Endothelial cell of umbilical vein (primary cell): ENCODE measurements at regions of chr20 and their contacts with region 1.

Region 1: DNA sequence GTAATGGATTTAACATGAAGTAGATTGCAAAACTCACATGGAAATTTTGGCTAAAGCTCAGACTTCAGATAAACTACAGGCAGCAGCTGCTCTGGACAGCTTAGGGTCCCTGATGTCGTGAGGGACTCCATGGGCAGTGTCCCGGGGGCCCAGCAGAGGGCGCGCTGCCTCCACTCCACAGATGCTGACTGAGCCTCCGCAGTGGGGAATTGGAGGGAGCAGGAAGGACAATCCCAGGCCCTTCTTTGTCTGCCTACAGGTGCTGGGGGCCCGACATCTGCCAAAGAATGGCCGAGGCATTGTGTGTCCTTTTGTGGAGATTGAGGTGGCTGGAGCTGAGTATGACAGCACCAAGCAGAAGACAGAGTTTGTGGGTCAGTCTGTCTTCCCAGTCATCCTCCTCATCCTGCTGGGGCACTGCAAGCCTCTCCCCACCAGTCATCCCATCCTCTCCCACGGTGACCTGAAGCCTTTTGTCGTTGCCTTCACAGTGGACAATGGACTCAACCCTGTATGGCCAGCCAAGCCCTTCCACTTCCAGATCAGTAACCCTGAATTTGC is 35.9 kb downstream of the PLCG1 start:
- DNase-seq: peak; percentile 70
- H3K4me3 ChIP-seq: no peak overlapping the region
- H3K27ac ChIP-seq: no peak overlapping the region
- H3K4me1 ChIP-seq: peaks cover 7% of the 10 kb centered on the region
- H3K27me3 ChIP-seq: no peaks in the 10 kb centered on the region
- CTCF ChIP-seq: peak; percentile 94 to 96
- POLR2A ChIP-seq: no peak

Region 2: GRCh38 chr20:41142919-41143318 is 30.3 kb before region 1 on chr20:
- CTCF ChIA-PET with region 1: interaction called, 23 read pairs
- POLR2A ChIA-PET with region 1: no interaction called
- dilution Hi-C with region 1: no loop called
- intact Hi-C with region 1: no loop called
- DNase-seq: no peak
- H3K4me3 ChIP-seq: no peak overlapping the region
- H3K27ac ChIP-seq: no peak overlapping the region
- H3K4me1 ChIP-seq: peaks cover 80% of the 10 kb centered on the region
- H3K27me3 ChIP-seq: no peaks in the 10 kb centered on the region
- CTCF ChIP-seq: no peak
- POLR2A ChIP-seq: no peak

Region 3: GRCh38 chr20:41200446-41201202 is 27.4 kb after region 1 on chr20:
- CTCF ChIA-PET with region 1: interaction called, 23 read pairs
- POLR2A ChIA-PET with region 1: no interaction called
- dilution Hi-C with region 1: no loop called
- intact Hi-C with region 1: loop called (anchors 2 kb)
- DNase-seq: peak; percentile 87
- H3K4me3 ChIP-seq: no peak overlapping the region
- H3K27ac ChIP-seq: peak overlapping the region; percentile 63
- H3K4me1 ChIP-seq: peaks cover 18% of the 10 kb centered on the region
- H3K27me3 ChIP-seq: no peaks in the 10 kb centered on the region
- CTCF ChIP-seq: no peak
- POLR2A ChIP-seq: no peak

Region 4: GRCh38 chr20:41242807-41243206 is 69.6 kb after region 1 on chr20:
- CTCF ChIA-PET with region 1: interaction called, 11 read pairs
- POLR2A ChIA-PET with region 1: no interaction called
- dilution Hi-C with region 1: no loop called
- intact Hi-C with region 1: no loop called
- DNase-seq: no peak
- H3K4me3 ChIP-seq: no peak overlapping the region
- H3K27ac ChIP-seq: no peak overlapping the region
- H3K4me1 ChIP-seq: peaks cover 27% of the 10 kb centered on the region
- H3K27me3 ChIP-seq: no peaks in the 10 kb centered on the region
- CTCF ChIP-seq: no peak
- POLR2A ChIP-seq: no peak

Region 5: GRCh38 chr20:41339507-41340326 is 166.5 kb after region 1 on chr20:
- CTCF ChIA-PET with region 1: interaction called, 295 read pairs
- POLR2A ChIA-PET with region 1: interaction called, 3 read pairs
- dilution Hi-C with region 1: no loop called
- intact Hi-C with region 1: loop called (anchors 1 kb)
- DNase-seq: peak; percentile 62
- H3K4me3 ChIP-seq: peak overlapping the region; percentile 18 to 65 (median 20)
- H3K27ac ChIP-seq: no peak overlapping the region
- H3K4me1 ChIP-seq: peaks cover 17% of the 10 kb centered on the region
- H3K27me3 ChIP-seq: no peaks in the 10 kb centered on the region
- CTCF ChIP-seq: peak; percentile 93 to 97
- POLR2A ChIP-seq: no peak